ENCODE measurements at regions of chr3 and their contacts with region 1.

Region 1: DNA sequence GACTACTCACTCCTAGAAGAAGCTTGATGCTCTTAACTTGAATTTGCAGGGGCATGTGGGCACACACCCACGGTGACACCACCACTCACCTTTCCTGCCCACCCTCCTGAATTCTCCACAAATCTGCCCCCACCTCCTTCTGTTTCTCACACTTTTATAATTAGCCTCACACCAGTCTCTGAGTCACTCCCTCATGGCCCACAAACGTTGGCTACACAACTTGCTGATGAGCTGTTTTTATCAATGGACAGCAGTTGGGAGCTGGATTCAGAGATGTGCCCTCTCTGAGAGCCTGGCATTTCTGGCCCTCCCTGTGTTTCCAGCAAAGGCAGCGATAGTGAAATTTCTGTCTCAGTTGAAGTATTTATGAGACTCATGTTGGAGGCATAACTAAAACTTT is 1.3 kb downstream of the COLQ start:
- DNase-seq: no peak
- ATAC-seq: no peak
- H3K4me3 ChIP-seq: peak overlapping the region in 1 of 2 donors; percentile 63
- H3K27ac ChIP-seq: no peak overlapping the region
- H3K4me1 ChIP-seq: peaks cover 0 to 2% of the 10 kb centered on the region in 2 donors
- H3K27me3 ChIP-seq: no peaks in the 10 kb centered on the region

Region 2: DNA sequence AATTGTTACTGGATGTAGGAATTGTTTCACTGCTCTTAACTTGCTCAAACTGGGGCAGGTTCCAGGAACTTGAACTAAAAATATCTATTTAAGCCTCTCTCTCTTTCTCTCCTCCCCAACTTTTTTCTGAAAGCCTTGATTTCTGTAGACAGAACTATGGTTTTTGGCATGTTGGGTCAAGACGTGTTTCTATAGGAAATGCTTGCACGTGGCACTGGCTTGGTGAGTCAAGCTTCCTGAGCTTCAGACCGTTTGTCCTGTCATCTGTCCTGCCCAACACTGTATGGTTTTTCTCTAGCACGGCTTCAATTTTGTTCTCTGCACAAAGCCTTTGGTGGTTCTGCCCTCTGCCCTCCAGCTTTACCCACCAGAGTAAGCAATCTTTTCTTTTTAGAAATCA is 79.3 kb before region 1 on chr3:
- intact Hi-C with region 1: loop called in 1 of 2 experiments (anchors 5 kb)
- DNase-seq: no peak
- ATAC-seq: no peak
- H3K4me3 ChIP-seq: no peak overlapping the region
- H3K27ac ChIP-seq: peak overlapping the region; percentile 69 to 72
- H3K4me1 ChIP-seq: peaks cover 2 to 3% of the 10 kb centered on the region in 2 donors
- H3K27me3 ChIP-seq: no peaks in the 10 kb centered on the region

Region 3: DNA sequence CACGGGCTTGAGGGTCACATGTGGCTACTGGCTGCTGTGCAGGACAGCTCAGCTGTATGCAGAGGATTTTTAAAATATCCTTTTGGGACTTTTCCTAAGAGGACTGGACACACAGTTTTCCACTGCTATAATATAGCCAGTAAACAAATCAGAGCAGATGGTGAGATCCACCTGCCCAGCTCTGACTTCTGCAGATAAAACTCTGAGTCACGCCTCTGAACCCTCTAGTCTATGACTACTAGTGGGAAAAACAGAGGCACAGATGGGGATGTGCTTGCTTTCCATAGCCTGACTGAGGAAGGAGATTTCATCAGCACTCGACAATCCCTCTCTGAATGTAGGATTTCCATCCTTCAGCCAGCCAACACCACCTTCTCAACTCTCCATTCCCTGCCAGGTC is 43.8 kb before region 1 on chr3:
- intact Hi-C with region 1: loop called in 1 of 2 experiments (anchors 5 kb)
- DNase-seq: no peak
- ATAC-seq: no peak
- H3K4me3 ChIP-seq: no peak overlapping the region
- H3K27ac ChIP-seq: no peak overlapping the region
- H3K4me1 ChIP-seq: no peaks in the 10 kb centered on the region
- H3K27me3 ChIP-seq: no peaks in the 10 kb centered on the region

Region 4: GRCh38 chr3:15591242-15591641 is 71.1 kb after region 1 on chr3:
- intact Hi-C with region 1: no loop called
- DNase-seq: no peak
- ATAC-seq: no peak
- H3K4me3 ChIP-seq: no peak overlapping the region
- H3K27ac ChIP-seq: no peak overlapping the region
- H3K4me1 ChIP-seq: no peaks in the 10 kb centered on the region
- H3K27me3 ChIP-seq: no peaks in the 10 kb centered on the region

Measured in aorta (tissue), 5 donors.